ENCODE measurements at regions of chr3 and their contacts with region 1.

Region 1: DNA sequence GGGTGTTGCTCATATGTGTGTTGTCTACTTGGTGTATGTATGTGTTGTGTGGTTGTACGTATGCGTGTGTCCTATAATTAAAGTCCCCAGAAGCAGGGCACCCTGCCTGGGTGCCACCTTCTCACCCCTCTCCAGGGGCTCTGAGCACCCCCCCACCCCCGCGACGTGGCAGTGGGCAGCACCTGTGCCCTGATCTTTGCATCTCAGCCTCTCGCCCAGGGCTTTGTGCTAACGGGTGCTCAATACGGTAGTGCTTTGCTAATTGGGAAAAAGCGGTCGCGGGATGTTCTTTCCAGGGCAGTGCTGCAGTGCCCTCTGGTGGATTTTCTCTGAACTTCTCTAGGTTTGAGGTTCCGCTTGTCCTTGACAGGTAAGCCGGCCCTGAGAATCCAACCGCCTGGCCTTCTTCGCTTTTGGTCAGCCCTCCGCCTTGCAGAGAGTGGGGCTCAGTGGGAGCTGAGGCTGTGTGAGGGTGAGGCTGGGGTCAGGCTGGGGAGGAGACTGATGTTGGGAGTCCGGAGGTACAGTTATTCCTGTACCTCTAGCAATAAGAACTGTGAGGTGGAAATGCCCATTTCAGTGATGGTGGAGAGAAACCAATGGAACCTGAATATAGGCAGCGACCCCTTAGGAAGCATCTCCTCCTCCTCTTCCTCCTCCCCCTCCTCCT is 17.6 kb upstream of the EPHB3 start:
- H3K4me3 Mint-ChIP-seq: no peak overlapping the region
- H3K27ac Mint-ChIP-seq: peak overlapping the region; percentile 25
- H3K4me1 Mint-ChIP-seq: peaks cover 55% of the 10 kb centered on the region
- H3K27me3 Mint-ChIP-seq: peaks cover 42% of the 10 kb centered on the region

Region 2: GRCh38 chr3:184371570-184372018 is 172.4 kb before region 1 on chr3:
- intact Hi-C with region 1: loop called (anchors 1 kb)
- H3K4me3 Mint-ChIP-seq: no peak overlapping the region
- H3K27ac Mint-ChIP-seq: no peak overlapping the region
- H3K4me1 Mint-ChIP-seq: peaks cover 13% of the 10 kb centered on the region
- H3K27me3 Mint-ChIP-seq: peaks cover 38% of the 10 kb centered on the region

Region 3: DNA sequence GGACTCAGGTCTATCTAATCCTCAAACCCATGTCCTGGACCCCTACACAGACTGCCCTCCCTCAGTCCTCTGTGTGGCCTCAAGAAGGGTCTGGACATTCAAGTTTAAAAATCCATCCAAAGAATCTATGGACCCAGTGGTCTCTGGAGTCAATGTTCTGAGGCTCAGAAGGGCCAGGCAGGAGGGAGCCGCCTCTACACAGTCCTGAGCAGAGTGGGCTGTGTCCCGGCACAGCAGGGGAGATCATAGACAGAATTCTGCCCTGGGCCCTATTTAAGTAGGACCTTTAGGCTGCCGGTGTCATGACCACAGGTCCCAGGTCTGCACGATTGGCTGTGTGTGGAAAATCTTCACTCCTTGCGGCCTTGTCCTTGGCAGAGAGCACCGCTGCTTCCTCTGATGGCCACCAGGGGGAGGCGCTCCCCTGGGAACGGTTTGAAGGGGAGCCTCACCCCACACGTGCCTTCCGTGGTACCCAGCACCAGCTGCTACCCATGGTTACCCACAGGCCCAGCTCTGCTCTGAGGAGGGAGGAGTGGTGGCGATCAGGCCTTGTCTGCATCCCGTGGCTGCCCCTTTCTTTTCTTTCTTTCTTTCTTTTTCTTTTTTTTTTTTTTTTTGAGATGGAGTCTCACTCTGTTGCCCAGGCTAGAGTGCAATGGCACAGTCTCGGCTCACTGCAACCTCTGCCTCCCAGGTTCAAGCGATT is 126.2 kb before region 1 on chr3:
- intact Hi-C with region 1: loop called (anchors 1 kb)
- H3K4me3 Mint-ChIP-seq: no peak overlapping the region
- H3K27ac Mint-ChIP-seq: no peak overlapping the region
- H3K4me1 Mint-ChIP-seq: no peaks in the 10 kb centered on the region
- H3K27me3 Mint-ChIP-seq: peaks cover 1% of the 10 kb centered on the region

Region 4: GRCh38 chr3:184513276-184514170 is 30.5 kb before region 1 on chr3:
- intact Hi-C with region 1: loop called (anchors 1 kb)
- H3K4me3 Mint-ChIP-seq: peak overlapping the region; percentile 76
- H3K27ac Mint-ChIP-seq: peak overlapping the region; percentile 84
- H3K4me1 Mint-ChIP-seq: peaks cover 39% of the 10 kb centered on the region
- H3K27me3 Mint-ChIP-seq: peaks cover 21% of the 10 kb centered on the region

Region 5: DNA sequence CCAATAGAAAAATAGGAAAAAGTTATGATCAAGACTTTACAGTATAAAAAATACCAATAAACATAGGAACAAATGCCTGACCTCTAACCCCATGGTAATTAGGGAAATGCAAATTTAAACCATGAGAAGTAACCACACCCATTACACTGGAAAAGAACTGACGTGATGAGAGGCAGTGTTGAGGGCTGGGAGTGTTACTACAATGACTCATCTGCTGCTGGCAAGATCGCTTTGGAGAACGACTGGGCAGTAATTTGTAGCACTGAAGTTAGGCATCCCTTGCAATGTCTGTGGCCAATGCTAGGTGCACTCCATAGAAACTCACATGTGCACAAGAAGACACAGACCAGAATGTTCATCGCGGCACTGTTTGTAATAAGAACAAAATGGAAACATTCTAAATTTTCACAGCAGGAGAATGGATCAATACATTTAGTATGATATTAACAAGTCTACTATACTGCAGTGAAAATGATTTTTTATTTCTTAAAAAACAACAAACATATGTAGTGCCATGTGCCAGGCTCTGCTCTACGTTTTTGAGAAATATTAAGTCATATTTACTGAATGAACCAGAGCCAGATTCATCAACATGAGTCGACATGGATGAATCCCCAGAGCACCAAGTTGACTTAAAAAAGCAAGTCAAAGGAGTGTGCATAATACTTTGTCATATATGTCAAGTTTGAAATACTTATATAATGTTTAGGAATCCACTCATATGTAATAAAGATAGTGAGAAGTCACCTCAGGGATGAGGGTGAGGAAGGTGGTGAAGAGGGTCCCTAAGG is 20.0 kb before region 1 on chr3:
- intact Hi-C with region 1: loop called (anchors 1 kb)
- H3K4me3 Mint-ChIP-seq: no peak overlapping the region
- H3K27ac Mint-ChIP-seq: peak overlapping the region; percentile 99
- H3K4me1 Mint-ChIP-seq: peaks cover 34% of the 10 kb centered on the region
- H3K27me3 Mint-ChIP-seq: peaks cover 11% of the 10 kb centered on the region

Measured in dendritic cell treated with granulocyte-macrophage colony-stimulating factor and Interleukin-4, amounts not matched to agents 40 ng/mL and 50 ng/mL, for 4 days (primary cell).